ENCODE measurements at regions of chr18 and their contacts with region 1.

Region 1: GRCh38 chr18:44712025-44712424 is 31.3 kb downstream of the SETBP1 start:
- DNase-seq: no peak
- ATAC-seq: no peak
- H3K4me3 ChIP-seq: no peak overlapping the region
- H3K4me3 Mint-ChIP-seq: no peak overlapping the region
- H3K27ac ChIP-seq: no peak overlapping the region
- H3K27ac Mint-ChIP-seq: no peak overlapping the region
- H3K4me1 ChIP-seq: peaks cover 0 to 13% of the 10 kb centered on the region in 2 experiments
- H3K4me1 Mint-ChIP-seq: peaks cover 0 to 20% (median 6%) of the 10 kb centered on the region in 3 donors
- H3K27me3 ChIP-seq: no peaks in the 10 kb centered on the region
- H3K27me3 Mint-ChIP-seq: peaks cover 3 to 9% of the 10 kb centered on the region in 2 donors

Region 2: GRCh38 chr18:44961288-44961995 is 249.4 kb after region 1 on chr18:
- CTCF ChIA-PET with region 1: interaction called in 1 of 2 experiments, 15 read pairs
- POLR2A ChIA-PET with region 1: no interaction called
- DNase-seq: no peak
- ATAC-seq: no peak
- H3K4me3 ChIP-seq: no peak overlapping the region
- H3K4me3 Mint-ChIP-seq: no peak overlapping the region
- H3K27ac ChIP-seq: no peak overlapping the region
- H3K27ac Mint-ChIP-seq: no peak overlapping the region
- H3K4me1 ChIP-seq: no peaks in the 10 kb centered on the region
- H3K4me1 Mint-ChIP-seq: no peaks in the 10 kb centered on the region
- H3K27me3 ChIP-seq: no peaks in the 10 kb centered on the region
- H3K27me3 Mint-ChIP-seq: peaks cover 0 to 3% of the 10 kb centered on the region in 2 donors